Naive thymus-derived CD4-positive, alpha-beta T cell (primary cell): ENCODE measurements at regions of chr16 and their contacts with region 1.

Region 1: DNA sequence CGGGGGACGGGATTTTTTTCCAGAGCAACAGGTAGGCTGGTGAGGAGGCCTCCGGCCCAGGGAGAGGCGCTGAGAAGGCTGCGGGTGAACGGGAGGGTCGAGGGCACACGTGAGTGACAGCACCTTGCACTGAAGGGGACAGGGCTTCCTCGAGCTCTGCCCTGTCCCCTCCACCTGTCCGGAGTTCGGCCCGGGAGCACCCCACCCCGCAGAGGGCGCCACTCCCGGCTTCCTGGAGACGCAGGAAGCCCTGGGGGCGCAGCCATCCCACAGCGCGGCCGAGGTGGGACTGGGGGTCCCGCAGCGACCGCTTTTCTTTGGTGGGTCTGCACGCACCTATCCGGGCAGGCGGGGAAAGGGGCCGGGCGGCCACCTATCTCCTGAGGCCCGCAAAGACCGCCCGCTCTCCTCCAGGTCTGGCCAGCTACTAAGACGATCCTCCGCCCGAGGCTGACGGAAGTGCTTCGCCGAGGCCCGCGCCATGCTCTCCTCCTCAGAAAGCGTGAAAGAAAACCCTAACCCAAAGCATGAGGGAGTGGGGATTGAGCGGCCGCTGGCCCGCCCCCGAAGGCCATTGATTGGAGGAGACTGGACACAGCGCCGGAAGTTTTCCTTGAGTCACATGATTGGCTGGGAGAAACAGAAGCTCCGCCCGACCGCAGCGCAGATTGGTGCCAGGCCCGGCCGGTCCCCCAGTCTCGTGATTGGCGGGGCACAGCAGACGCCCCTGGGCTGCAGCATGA is 34.3 kb downstream of the DDX19A start:
- DNase-seq: peak; percentile 83 to 97 (median 96)
- ATAC-seq: peak; percentile 96
- H3K4me3 ChIP-seq: peak overlapping the region; percentile 86
- H3K4me3 Mint-ChIP-seq: peak overlapping the region; percentile 89 to 100 (median 97)
- H3K27ac ChIP-seq: peak overlapping the region; percentile 83
- H3K27ac Mint-ChIP-seq: peak overlapping the region; percentile 92 to 98 (median 94)
- H3K4me1 ChIP-seq: peaks cover 9 to 13% of the 10 kb centered on the region in 2 donors
- H3K4me1 Mint-ChIP-seq: peaks cover 0 to 26% (median 24%) of the 10 kb centered on the region in 7 donors
- H3K27me3 ChIP-seq: no peaks in the 10 kb centered on the region
- H3K27me3 Mint-ChIP-seq: no peaks in the 10 kb centered on the region

Region 2: DNA sequence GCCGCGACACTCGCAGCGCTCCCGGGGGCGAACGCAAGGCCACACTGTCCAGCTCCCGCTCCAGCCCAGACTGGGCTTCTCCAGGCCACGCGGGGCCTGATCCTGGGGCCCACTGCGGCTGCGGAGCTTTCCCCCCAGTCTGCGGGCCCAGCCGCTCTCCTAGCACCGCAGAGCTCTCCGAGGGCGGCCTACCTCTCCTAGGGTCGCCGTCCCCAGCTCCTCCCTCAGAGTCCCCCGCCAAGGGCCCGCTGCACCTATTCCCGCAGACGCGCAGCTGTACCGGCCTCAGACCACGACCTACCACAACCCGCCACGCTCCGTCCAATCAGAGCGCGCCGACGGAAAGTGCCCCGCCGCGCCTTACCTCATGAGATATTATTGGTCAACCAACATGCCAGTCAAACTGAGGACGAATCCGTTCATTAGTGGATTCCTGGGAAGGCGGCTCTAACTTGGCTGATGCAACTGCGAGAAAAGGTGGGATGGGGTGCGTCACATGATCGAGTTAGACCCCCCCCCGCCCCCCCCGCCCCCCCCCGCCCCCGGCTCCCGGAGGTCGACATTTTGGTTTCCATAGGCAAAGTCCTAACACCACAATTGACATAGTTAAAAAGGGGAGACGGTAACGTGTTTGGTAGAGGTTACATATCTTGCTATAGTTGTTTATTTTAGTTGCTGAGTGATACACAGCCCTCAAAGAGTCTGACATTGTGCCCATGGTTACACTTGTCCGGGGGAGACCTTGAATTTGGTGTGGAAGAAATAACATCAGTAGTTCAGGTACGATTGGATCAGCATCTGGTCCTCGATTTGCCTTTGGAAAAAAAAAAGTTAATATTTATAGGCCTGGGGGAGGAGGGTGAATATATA is 91.6 kb before region 1 on chr16 and contains the start of gene AARS1:
- CTCF ChIA-PET with region 1: no interaction called
- POLR2A ChIA-PET with region 1: interaction called, 11 read pairs
- intact Hi-C with region 1: loop called (anchors 1 kb)
- DNase-seq: peak; percentile 79 to 97 (median 96)
- ATAC-seq: peak; percentile 98
- H3K4me3 ChIP-seq: peak within 1 kb of the TSS; percentile 65
- H3K4me3 Mint-ChIP-seq: peak within 1 kb of the TSS; percentile 90 to 100 (median 98)
- H3K27ac ChIP-seq: peak within 1 kb of the TSS; percentile 85
- H3K27ac Mint-ChIP-seq: peak within 1 kb of the TSS; percentile 95 to 99 (median 98)
- H3K4me1 ChIP-seq: no peaks in the 10 kb centered on the region
- H3K4me1 Mint-ChIP-seq: peaks cover 6 to 37% (median 25%) of the 10 kb centered on the region in 7 donors
- H3K27me3 ChIP-seq: no peaks in the 10 kb centered on the region
- H3K27me3 Mint-ChIP-seq: peaks cover 0 to 2% (median 0%) of the 10 kb centered on the region in 5 donors
- total RNA-seq, gene AARS1: 24.2 to 96.7 (median 94.0) TPM

Region 3: DNA sequence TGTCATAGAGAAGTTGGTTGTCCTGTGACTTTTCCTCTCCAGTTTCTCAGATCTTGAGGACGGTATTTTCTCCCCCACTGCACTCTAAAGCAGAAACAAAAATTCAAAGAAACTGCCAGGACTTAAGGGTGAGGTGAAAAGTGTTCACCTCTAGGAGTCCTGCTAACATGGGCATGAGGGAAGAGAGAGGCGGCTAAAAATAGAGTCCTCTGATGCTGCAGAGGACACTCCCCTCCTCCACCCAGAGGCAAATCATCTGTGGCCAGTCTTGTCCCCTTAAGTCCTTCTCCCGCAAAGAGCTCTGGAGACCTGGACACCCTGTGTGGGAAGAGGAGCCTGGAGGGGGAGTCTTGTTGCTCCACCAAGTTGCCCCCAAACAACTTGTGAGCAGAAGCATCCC is 39.0 kb before region 1 on chr16:
- CTCF ChIA-PET with region 1: interaction called, 8 read pairs
- POLR2A ChIA-PET with region 1: interaction called, 32 read pairs
- intact Hi-C with region 1: loop called (anchors 1 kb)
- DNase-seq: no peak
- ATAC-seq: no peak
- H3K4me3 ChIP-seq: no peak overlapping the region
- H3K4me3 Mint-ChIP-seq: no peak overlapping the region
- H3K27ac ChIP-seq: no peak overlapping the region
- H3K27ac Mint-ChIP-seq: peak overlapping the region in 3 of 9 donors; percentile 37 to 77 (median 74)
- H3K4me1 ChIP-seq: peaks cover 5 to 6% of the 10 kb centered on the region in 2 donors
- H3K4me1 Mint-ChIP-seq: peaks cover 5 to 16% (median 10%) of the 10 kb centered on the region in 7 donors
- H3K27me3 ChIP-seq: no peaks in the 10 kb centered on the region
- H3K27me3 Mint-ChIP-seq: no peaks in the 10 kb centered on the region

Region 4: DNA sequence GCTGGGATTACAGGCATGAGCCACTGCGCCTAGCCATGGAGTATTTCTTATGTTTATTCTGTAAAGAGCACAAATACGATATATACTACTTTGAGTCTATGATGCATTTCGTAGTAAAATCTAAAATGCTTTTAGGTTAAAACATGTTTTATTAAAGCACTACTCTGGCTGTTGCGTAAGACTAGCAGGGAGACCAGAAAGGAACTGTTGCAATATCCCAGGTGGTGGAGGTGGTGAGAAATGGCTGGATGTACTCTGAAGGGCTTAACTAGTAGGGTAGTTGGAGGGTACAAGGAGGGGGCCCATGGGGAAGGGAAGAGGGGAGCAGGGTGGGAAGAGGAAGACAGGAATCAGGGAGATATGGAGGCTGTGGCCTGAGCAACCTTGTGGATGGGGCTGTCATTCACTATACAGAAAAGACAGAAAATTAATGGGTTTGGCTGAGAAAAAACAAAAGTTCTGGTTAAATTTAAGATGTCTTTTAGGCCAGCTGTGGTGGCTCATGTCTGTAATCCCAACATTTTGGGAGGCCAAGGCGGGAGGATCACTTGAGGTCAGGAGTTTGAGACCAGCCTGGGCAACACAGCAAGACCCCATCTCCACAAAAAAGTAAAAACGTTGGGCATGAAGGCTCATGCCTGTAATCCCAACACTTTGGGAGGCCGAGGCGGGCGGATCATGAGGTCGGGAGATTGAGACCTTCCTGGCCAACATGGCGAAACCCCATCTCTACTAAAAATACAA is 22.1 kb after region 1 on chr16:
- CTCF ChIA-PET with region 1: no interaction called
- POLR2A ChIA-PET with region 1: interaction called, 7 read pairs
- intact Hi-C with region 1: loop called (anchors 1 to 2 kb)
- DNase-seq: no peak
- ATAC-seq: no peak
- H3K4me3 ChIP-seq: no peak overlapping the region
- H3K4me3 Mint-ChIP-seq: peak overlapping the region; percentile 6 to 92 (median 30)
- H3K27ac ChIP-seq: no peak overlapping the region
- H3K27ac Mint-ChIP-seq: peak overlapping the region in 6 of 9 donors; percentile 14 to 90 (median 50)
- H3K4me1 ChIP-seq: peaks cover 13 to 26% of the 10 kb centered on the region in 2 donors
- H3K4me1 Mint-ChIP-seq: peaks cover 38 to 69% (median 47%) of the 10 kb centered on the region in 7 donors
- H3K27me3 ChIP-seq: no peaks in the 10 kb centered on the region
- H3K27me3 Mint-ChIP-seq: no peaks in the 10 kb centered on the region

Region 5: GRCh38 chr16:70438969-70439862 is 58.2 kb after region 1 on chr16 and contains the start of gene ST3GAL2:
- CTCF ChIA-PET with region 1: interaction called, 7 read pairs
- POLR2A ChIA-PET with region 1: interaction called, 59 read pairs
- intact Hi-C with region 1: loop called (anchors 1 kb)
- DNase-seq: peak; percentile 84 to 94 (median 90)
- ATAC-seq: peak; percentile 99
- H3K4me3 ChIP-seq: peak within 1 kb of the TSS; percentile 82
- H3K4me3 Mint-ChIP-seq: peak within 1 kb of the TSS; percentile 92 to 99 (median 98)
- H3K27ac ChIP-seq: peak within 1 kb of the TSS; percentile 58
- H3K27ac Mint-ChIP-seq: peak within 1 kb of the TSS; percentile 84 to 97 (median 93)
- H3K4me1 ChIP-seq: peaks cover 11 to 23% of the 10 kb centered on the region in 2 donors
- H3K4me1 Mint-ChIP-seq: peaks cover 18 to 46% (median 37%) of the 10 kb centered on the region in 7 donors
- H3K27me3 ChIP-seq: no peaks in the 10 kb centered on the region
- H3K27me3 Mint-ChIP-seq: no peaks in the 10 kb centered on the region
- total RNA-seq, gene ST3GAL2: 16.6 to 35.9 (median 30.4) TPM

Region 6: DNA sequence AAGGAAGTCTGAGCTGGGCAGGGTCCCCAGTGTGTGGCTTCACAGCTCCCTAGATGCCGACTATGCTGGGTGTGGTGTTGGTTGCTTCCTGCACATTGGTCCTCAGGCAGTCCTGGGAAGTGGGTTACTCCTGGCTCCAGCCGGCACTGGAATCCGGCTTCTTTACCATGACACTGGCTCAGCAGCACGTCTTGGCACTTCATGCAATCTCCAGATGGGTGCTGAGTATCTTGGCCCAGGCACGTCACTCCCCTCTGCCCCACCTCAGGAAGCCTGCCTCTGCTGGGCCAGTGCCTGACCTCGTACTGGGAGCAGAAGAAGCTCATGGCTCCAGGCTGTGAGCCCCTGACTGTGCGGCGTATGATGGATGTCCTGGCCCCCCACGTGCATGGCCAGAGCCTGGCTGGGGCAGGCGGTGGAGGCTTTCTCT is 97.9 kb after region 1 on chr16:
- CTCF ChIA-PET with region 1: no interaction called
- POLR2A ChIA-PET with region 1: interaction called, 3 read pairs
- intact Hi-C with region 1: loop called in 1 of 2 experiments (anchors 5 kb)
- DNase-seq: no peak
- ATAC-seq: no peak
- H3K4me3 ChIP-seq: no peak overlapping the region
- H3K4me3 Mint-ChIP-seq: no peak overlapping the region
- H3K27ac ChIP-seq: peak overlapping the region; percentile 1
- H3K27ac Mint-ChIP-seq: peak overlapping the region in 3 of 9 donors; percentile 25 to 81 (median 58)
- H3K4me1 ChIP-seq: no peaks in the 10 kb centered on the region
- H3K4me1 Mint-ChIP-seq: peaks cover 0 to 21% (median 0%) of the 10 kb centered on the region in 7 donors
- H3K27me3 ChIP-seq: no peaks in the 10 kb centered on the region
- H3K27me3 Mint-ChIP-seq: no peaks in the 10 kb centered on the region

Region 7: DNA sequence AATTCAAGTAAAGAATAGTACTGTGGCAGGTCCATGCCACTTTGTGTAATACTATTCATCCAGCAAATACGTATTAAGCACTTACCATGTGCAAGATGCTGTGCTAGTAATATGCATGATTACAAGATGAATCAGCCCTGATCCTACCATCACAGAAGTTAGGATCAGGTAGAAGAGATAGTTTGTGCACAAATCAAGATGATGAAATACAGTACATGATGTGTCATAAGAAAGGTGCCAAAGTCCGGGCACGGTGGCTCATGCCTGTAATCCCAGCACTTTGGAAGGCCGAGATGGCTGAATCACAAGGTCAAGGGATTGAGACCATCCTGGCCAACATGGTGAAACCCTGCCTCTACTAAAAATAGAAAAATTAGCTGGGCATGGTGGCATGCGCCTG is 131.4 kb after region 1 on chr16:
- CTCF ChIA-PET with region 1: no interaction called
- POLR2A ChIA-PET with region 1: no interaction called
- intact Hi-C with region 1: no loop called
- DNase-seq: no peak
- ATAC-seq: no peak
- H3K4me3 ChIP-seq: no peak overlapping the region
- H3K4me3 Mint-ChIP-seq: no peak overlapping the region
- H3K27ac ChIP-seq: no peak overlapping the region
- H3K27ac Mint-ChIP-seq: no peak overlapping the region
- H3K4me1 ChIP-seq: no peaks in the 10 kb centered on the region
- H3K4me1 Mint-ChIP-seq: peaks cover 4 to 13% (median 9%) of the 10 kb centered on the region in 7 donors
- H3K27me3 ChIP-seq: no peaks in the 10 kb centered on the region
- H3K27me3 Mint-ChIP-seq: no peaks in the 10 kb centered on the region

Region 8: GRCh38 chr16:70800781-70801530 is 419.9 kb after region 1 on chr16 and contains the start of gene VAC14:
- CTCF ChIA-PET with region 1: no interaction called
- POLR2A ChIA-PET with region 1: no interaction called
- intact Hi-C with region 1: loop called in 1 of 2 experiments (anchors 1 kb)
- DNase-seq: peak; percentile 96 to 99 (median 97)
- ATAC-seq: peak; percentile 99
- H3K4me3 ChIP-seq: peak within 1 kb of the TSS; percentile 90
- H3K4me3 Mint-ChIP-seq: peak within 1 kb of the TSS; percentile 90 to 98 (median 94)
- H3K27ac ChIP-seq: peak within 1 kb of the TSS; percentile 78
- H3K27ac Mint-ChIP-seq: peak within 1 kb of the TSS; percentile 84 to 95 (median 92)
- H3K4me1 ChIP-seq: peaks cover 11 to 17% of the 10 kb centered on the region in 2 donors
- H3K4me1 Mint-ChIP-seq: peaks cover 19 to 49% (median 44%) of the 10 kb centered on the region in 7 donors
- H3K27me3 ChIP-seq: no peaks in the 10 kb centered on the region
- H3K27me3 Mint-ChIP-seq: peaks cover 0 to 15% (median 0%) of the 10 kb centered on the region in 5 donors
- total RNA-seq, gene VAC14: 36.7 to 47.1 (median 45.9) TPM